B cell (primary cell): ENCODE measurements at regions of chr21 and their contacts with region 1.

Region 1: DNA sequence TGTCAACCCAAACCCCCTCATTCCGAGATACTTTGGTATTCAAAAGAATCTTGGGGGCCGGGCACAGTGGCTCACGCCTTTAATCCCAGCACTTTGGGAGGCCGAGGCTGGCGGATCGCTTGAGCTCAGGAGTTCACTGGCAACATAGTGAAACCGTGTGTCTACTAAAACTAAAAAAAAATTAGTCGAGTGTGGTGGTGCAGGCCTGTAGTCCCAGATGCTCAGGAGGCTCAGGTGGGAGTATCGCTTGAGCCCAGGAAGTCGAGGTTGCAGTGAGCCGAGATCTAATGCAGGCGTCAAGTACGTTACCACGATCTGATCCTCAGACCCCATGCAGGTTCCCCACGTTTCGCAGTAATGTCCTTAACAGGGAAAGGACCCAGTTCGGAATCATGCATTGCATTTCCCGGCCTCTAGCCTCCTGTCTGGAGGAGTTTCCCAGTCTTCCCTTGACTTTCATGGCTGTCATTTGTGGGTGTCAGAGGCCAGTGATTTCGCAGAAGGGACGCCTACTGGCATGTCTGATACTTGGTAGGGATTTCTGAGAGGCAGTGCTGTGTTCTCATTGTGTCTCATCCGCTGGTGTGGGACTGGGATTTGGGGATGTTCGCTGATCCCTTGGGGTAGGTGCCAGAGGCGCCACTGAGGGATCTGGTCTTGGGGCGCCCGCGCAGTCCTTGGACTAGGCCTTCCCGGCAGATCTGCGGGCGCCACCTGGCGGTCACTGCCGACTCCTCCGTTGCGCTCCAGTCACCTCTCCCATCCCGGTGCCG is 39.3 kb upstream of the HMGN1 start:
- DNase-seq: peak; percentile 88
- ATAC-seq: peak; percentile 84
- H3K4me3 ChIP-seq: peak overlapping the region; percentile 38 to 63 (median 56)
- H3K4me3 Mint-ChIP-seq: peak overlapping the region; percentile 94
- H3K27ac ChIP-seq: peak overlapping the region; percentile 20 to 25
- H3K27ac Mint-ChIP-seq: peak overlapping the region; percentile 89
- H3K4me1 ChIP-seq: peaks cover 11 to 18% of the 10 kb centered on the region in 2 donors
- H3K4me1 Mint-ChIP-seq: peaks cover 24% of the 10 kb centered on the region
- H3K27me3 ChIP-seq: no peaks in the 10 kb centered on the region
- H3K27me3 Mint-ChIP-seq: no peaks in the 10 kb centered on the region
- CTCF ChIP-seq: peak; percentile 97

Region 2: GRCh38 chr21:39217356-39218081 is 170.7 kb before region 1 on chr21:
- CTCF ChIA-PET with region 1: no interaction called
- POLR2A ChIA-PET with region 1: no interaction called
- intact Hi-C with region 1: no loop called
- DNase-seq: no peak
- ATAC-seq: no peak
- H3K4me3 ChIP-seq: no peak overlapping the region
- H3K4me3 Mint-ChIP-seq: no peak overlapping the region
- H3K27ac ChIP-seq: no peak overlapping the region
- H3K27ac Mint-ChIP-seq: no peak overlapping the region
- H3K4me1 ChIP-seq: no peaks in the 10 kb centered on the region
- H3K4me1 Mint-ChIP-seq: no peaks in the 10 kb centered on the region
- H3K27me3 ChIP-seq: no peaks in the 10 kb centered on the region
- H3K27me3 Mint-ChIP-seq: no peaks in the 10 kb centered on the region
- CTCF ChIP-seq: no peak

Region 3: GRCh38 chr21:39373644-39374043 is 14.6 kb before region 1 on chr21:
- CTCF ChIA-PET with region 1: interaction called, 12 read pairs
- POLR2A ChIA-PET with region 1: interaction called, 7 read pairs
- intact Hi-C with region 1: no loop called
- DNase-seq: peak; percentile 47
- ATAC-seq: peak; percentile 54
- H3K4me3 ChIP-seq: no peak overlapping the region
- H3K4me3 Mint-ChIP-seq: no peak overlapping the region
- H3K27ac ChIP-seq: no peak overlapping the region
- H3K27ac Mint-ChIP-seq: no peak overlapping the region
- H3K4me1 ChIP-seq: peaks cover 0 to 14% of the 10 kb centered on the region in 2 donors
- H3K4me1 Mint-ChIP-seq: peaks cover 10% of the 10 kb centered on the region
- H3K27me3 ChIP-seq: peaks cover 0 to 3% (median 0%) of the 10 kb centered on the region in 4 experiments
- H3K27me3 Mint-ChIP-seq: no peaks in the 10 kb centered on the region
- CTCF ChIP-seq: peak; percentile 40

Region 4: GRCh38 chr21:39434950-39435349 is 46.7 kb after region 1 on chr21:
- CTCF ChIA-PET with region 1: no interaction called
- POLR2A ChIA-PET with region 1: no interaction called
- intact Hi-C with region 1: no loop called
- DNase-seq: no peak
- ATAC-seq: no peak
- H3K4me3 ChIP-seq: no peak overlapping the region
- H3K4me3 Mint-ChIP-seq: no peak overlapping the region
- H3K27ac ChIP-seq: no peak overlapping the region
- H3K27ac Mint-ChIP-seq: no peak overlapping the region
- H3K4me1 ChIP-seq: no peaks in the 10 kb centered on the region
- H3K4me1 Mint-ChIP-seq: no peaks in the 10 kb centered on the region
- H3K27me3 ChIP-seq: peaks cover 0 to 4% (median 1%) of the 10 kb centered on the region in 4 experiments
- H3K27me3 Mint-ChIP-seq: peaks cover 21% of the 10 kb centered on the region
- CTCF ChIP-seq: no peak

Region 5: GRCh38 chr21:39445321-39446269 is 57.4 kb after region 1 on chr21 and contains the start of gene LCA5L:
- CTCF ChIA-PET with region 1: interaction called, 4 read pairs
- POLR2A ChIA-PET with region 1: no interaction called
- intact Hi-C with region 1: loop called (anchors 2 kb)
- DNase-seq: peak; percentile 95
- ATAC-seq: peak; percentile 88
- H3K4me3 ChIP-seq: peak within 1 kb of the TSS; percentile 16 to 84 (median 81)
- H3K4me3 Mint-ChIP-seq: peak within 1 kb of the TSS; percentile 97
- H3K27ac ChIP-seq: peak within 1 kb of the TSS; percentile 76 to 88
- H3K27ac Mint-ChIP-seq: peak within 1 kb of the TSS; percentile 99
- H3K4me1 ChIP-seq: peaks cover 6 to 13% of the 10 kb centered on the region in 2 donors
- H3K4me1 Mint-ChIP-seq: peaks cover 12% of the 10 kb centered on the region
- H3K27me3 ChIP-seq: peaks cover 0 to 3% (median 0%) of the 10 kb centered on the region in 4 experiments
- H3K27me3 Mint-ChIP-seq: peaks cover 23% of the 10 kb centered on the region
- CTCF ChIP-seq: peak; percentile 26
- total RNA-seq, gene LCA5L: 0.39 and 0.62 TPM in 2 replicates

Region 6: GRCh38 chr21:39483924-39484323 is 95.7 kb after region 1 on chr21:
- CTCF ChIA-PET with region 1: no interaction called
- POLR2A ChIA-PET with region 1: no interaction called
- intact Hi-C with region 1: no loop called
- DNase-seq: no peak
- ATAC-seq: no peak
- H3K4me3 ChIP-seq: no peak overlapping the region
- H3K4me3 Mint-ChIP-seq: no peak overlapping the region
- H3K27ac ChIP-seq: no peak overlapping the region
- H3K27ac Mint-ChIP-seq: no peak overlapping the region
- H3K4me1 ChIP-seq: no peaks in the 10 kb centered on the region
- H3K4me1 Mint-ChIP-seq: no peaks in the 10 kb centered on the region
- H3K27me3 ChIP-seq: no peaks in the 10 kb centered on the region
- H3K27me3 Mint-ChIP-seq: peaks cover 6% of the 10 kb centered on the region
- CTCF ChIP-seq: no peak